CD8-positive, alpha-beta T cell (primary cell): ENCODE measurements at regions of chr1 and their contacts with region 1.

Region 1: DNA sequence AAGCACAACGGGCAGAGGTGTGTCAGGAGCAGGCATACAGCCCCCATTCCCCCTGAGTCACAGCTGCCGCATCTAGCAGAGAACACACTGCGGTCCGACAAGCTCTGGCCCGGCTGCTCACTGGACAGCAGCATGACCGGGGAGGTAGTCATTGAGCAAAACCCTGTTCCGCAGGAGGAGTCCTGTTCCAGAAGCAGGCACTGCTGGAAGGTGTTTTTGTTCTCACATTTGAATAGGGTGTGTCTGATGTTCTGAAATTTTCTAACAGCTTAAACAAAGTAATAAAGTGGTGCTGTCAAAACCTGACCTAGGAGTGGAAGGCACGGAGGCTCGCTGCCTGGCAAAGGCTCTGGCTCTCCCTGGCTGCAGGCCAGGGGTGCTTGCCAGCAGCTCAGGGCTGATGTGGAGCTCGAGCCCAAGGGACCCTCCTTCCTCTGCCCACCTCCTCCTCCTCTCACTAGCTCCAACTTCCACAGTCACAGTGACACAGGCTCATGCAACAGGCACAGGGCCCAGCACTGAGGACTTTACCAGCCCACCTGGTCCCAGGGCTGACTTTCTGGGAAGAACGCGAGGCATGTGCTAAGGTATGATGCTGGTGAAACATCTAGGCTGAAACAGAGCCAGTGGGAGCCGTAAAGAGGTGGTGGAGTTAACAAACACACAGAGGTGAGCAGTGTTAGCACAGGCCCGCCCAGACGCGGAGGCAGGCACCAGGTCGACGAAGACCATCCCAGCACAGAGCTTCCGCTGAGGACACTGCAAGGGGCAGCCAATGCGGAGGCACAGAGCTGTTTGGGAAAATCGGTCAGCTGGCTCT is 118.6 kb upstream of the IFFO2 start:
- DNase-seq: peak in 1 of 9 experiments; percentile 23
- ATAC-seq: peak; percentile 24
- H3K4me3 ChIP-seq: peak overlapping the region; percentile 16 to 21
- H3K4me3 Mint-ChIP-seq: peak overlapping the region; percentile 56
- H3K27ac ChIP-seq: peak overlapping the region in 1 of 2 experiments; percentile 52
- H3K27ac Mint-ChIP-seq: peak overlapping the region; percentile 69
- H3K4me1 ChIP-seq: peaks cover 46% of the 10 kb centered on the region
- H3K4me1 Mint-ChIP-seq: peaks cover 41% of the 10 kb centered on the region
- H3K27me3 ChIP-seq: no peaks in the 10 kb centered on the region
- H3K27me3 Mint-ChIP-seq: no peaks in the 10 kb centered on the region
- CTCF ChIP-seq: no peak

Region 2: DNA sequence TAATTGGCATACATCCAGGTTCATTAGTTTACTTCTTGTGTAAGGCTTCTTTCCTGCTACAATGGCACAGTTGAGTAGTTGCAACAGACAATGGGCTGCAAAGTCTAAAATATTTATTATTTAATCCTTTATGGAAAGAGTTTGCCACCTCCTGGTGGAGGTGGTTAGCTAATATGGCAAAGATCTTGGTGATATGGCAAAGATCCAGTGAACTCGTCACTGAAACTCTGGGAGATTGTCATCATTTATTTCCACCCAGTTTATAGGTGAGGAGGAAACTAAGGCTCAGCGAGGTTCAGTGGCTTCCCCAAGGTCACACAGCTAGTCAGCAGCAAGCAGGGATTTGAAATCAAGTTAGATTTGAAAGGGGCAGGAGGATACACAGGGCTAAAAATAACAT is 102.6 kb before region 1 on chr1:
- CTCF ChIA-PET with region 1: interaction called, 12 read pairs
- POLR2A ChIA-PET with region 1: interaction called, 5 read pairs
- intact Hi-C with region 1: no loop called
- DNase-seq: peak in 4 of 9 experiments; percentile 27 to 73 (median 52)
- ATAC-seq: peak; percentile 61
- H3K4me3 ChIP-seq: no peak overlapping the region
- H3K4me3 Mint-ChIP-seq: no peak overlapping the region
- H3K27ac ChIP-seq: no peak overlapping the region
- H3K27ac Mint-ChIP-seq: no peak overlapping the region
- H3K4me1 ChIP-seq: peaks cover 3% of the 10 kb centered on the region
- H3K4me1 Mint-ChIP-seq: peaks cover 4% of the 10 kb centered on the region
- H3K27me3 ChIP-seq: no peaks in the 10 kb centered on the region
- H3K27me3 Mint-ChIP-seq: peaks cover 7% of the 10 kb centered on the region
- CTCF ChIP-seq: peak; percentile 59

Region 3: DNA sequence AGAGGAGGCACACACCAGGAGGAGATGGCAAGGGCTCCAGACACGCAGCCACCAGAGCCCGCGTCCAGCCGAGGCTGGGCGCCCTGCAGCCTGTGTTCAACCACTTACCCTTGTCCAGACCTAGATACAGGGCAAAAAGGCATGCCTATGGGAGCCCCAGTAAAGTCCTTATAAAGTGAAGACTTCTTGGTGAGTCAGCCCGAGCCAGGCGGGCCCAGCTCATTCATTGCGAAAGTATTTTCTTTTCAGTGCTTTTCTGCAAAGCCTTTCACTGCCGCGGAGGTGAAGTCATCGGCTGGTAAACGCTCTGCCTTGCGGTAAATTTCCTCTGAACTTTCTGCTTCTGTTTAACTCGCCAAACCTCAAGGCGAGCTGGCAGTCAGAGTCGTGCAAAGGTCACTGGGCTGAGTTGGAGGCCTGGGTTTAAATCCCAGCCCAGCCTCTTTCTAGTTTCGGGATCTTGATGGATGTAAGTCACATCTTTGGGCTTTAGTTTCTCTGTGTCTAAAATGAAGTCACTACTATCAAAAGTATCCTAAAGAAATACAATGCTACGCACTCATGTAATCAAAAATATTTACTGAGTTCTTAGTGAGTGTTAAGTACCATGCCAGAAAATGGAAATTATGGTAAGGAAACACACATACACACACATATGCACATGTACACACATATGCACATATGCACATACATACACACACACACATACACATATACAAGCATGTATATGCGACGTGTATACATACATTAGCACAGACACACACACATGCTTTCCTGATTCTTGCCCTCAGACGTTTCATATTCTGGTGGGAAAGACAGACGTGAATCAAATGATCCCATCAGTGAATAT is 63.9 kb before region 1 on chr1:
- CTCF ChIA-PET with region 1: no interaction called
- POLR2A ChIA-PET with region 1: interaction called, 4 read pairs
- intact Hi-C with region 1: loop called in 1 of 2 experiments (anchors 2 kb)
- DNase-seq: peak in 8 of 9 experiments; percentile 46 to 72 (median 62)
- ATAC-seq: peak; percentile 94
- H3K4me3 ChIP-seq: peak overlapping the region in 1 of 2 experiments; percentile 18
- H3K4me3 Mint-ChIP-seq: peak overlapping the region; percentile 33
- H3K27ac ChIP-seq: no peak overlapping the region
- H3K27ac Mint-ChIP-seq: peak overlapping the region; percentile 71
- H3K4me1 ChIP-seq: peaks cover 17% of the 10 kb centered on the region
- H3K4me1 Mint-ChIP-seq: peaks cover 28% of the 10 kb centered on the region
- H3K27me3 ChIP-seq: no peaks in the 10 kb centered on the region
- H3K27me3 Mint-ChIP-seq: peaks cover 3% of the 10 kb centered on the region
- CTCF ChIP-seq: no peak